ENCODE measurements at regions of chr7 and their contacts with region 1.

Region 1: DNA sequence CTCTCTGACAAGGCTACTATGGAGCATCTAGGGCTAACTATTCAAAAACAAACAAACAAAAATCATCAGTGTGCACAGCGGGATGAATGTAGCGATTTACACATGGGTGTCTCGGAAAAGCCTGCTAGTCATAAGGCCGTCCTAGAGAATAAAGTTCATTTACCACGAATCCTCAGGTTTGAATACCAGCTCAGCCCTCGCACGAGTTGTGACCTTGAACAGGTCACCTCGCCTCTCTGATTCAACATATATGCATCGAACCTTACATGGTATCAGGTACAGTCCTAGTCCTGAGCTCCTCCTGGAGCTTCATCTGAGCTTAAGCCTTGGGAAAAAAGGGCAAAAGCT is 572 bp downstream of the ATP5MF start:
- DNase-seq: no peak
- ATAC-seq: no peak
- H3K4me3 ChIP-seq: peak overlapping the region; percentile 80 to 96 (median 83)
- H3K4me3 Mint-ChIP-seq: peak overlapping the region; percentile 99
- H3K27ac ChIP-seq: peak overlapping the region; percentile 50 to 80
- H3K27ac Mint-ChIP-seq: peak overlapping the region; percentile 89
- H3K4me1 ChIP-seq: peaks cover 9 to 23% of the 10 kb centered on the region in 2 donors
- H3K4me1 Mint-ChIP-seq: peaks cover 25% of the 10 kb centered on the region
- H3K27me3 ChIP-seq: no peaks in the 10 kb centered on the region
- H3K27me3 Mint-ChIP-seq: no peaks in the 10 kb centered on the region
- CTCF ChIP-seq: no peak

Region 2: GRCh38 chr7:99325545-99326407 is 139.6 kb before region 1 on chr7 and contains the start of gene ARPC1A:
- CTCF ChIA-PET with region 1: no interaction called
- POLR2A ChIA-PET with region 1: no interaction called
- intact Hi-C with region 1: loop called (anchors 1 kb)
- DNase-seq: peak; percentile 95
- ATAC-seq: peak; percentile 90
- H3K4me3 ChIP-seq: peak within 1 kb of the TSS; percentile 88 to 99 (median 91)
- H3K4me3 Mint-ChIP-seq: peak within 1 kb of the TSS; percentile 85
- H3K27ac ChIP-seq: peak within 1 kb of the TSS; percentile 56 to 80
- H3K27ac Mint-ChIP-seq: peak within 1 kb of the TSS; percentile 92
- H3K4me1 ChIP-seq: peaks cover 22 to 28% of the 10 kb centered on the region in 2 donors
- H3K4me1 Mint-ChIP-seq: peaks cover 36% of the 10 kb centered on the region
- H3K27me3 ChIP-seq: no peaks in the 10 kb centered on the region
- H3K27me3 Mint-ChIP-seq: no peaks in the 10 kb centered on the region
- CTCF ChIP-seq: no peak
- total RNA-seq, gene ARPC1A: 41.7 and 47.8 TPM in 2 replicates

Region 3: DNA sequence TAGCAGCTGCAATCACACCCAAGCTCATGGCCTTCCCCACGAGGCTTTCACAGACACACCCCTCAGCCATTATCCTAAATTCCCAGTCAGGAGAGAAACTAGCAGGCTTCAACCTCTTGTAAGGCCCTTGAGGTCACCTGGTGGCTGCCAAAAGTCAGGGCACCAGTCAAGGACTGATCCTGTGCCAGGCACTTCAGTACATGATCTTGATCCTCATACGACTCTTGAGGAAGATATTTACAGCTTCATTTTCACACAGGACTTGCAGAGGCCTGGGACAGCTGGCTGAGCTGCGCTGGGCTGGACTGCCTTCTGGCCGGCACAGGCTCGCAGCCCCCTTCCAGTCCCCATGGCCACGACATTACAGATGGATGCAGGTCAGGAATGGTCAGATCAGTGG is 65.8 kb before region 1 on chr7:
- CTCF ChIA-PET with region 1: no interaction called
- POLR2A ChIA-PET with region 1: no interaction called
- intact Hi-C with region 1: no loop called
- DNase-seq: no peak
- ATAC-seq: no peak
- H3K4me3 ChIP-seq: no peak overlapping the region
- H3K4me3 Mint-ChIP-seq: no peak overlapping the region
- H3K27ac ChIP-seq: no peak overlapping the region
- H3K27ac Mint-ChIP-seq: no peak overlapping the region
- H3K4me1 ChIP-seq: no peaks in the 10 kb centered on the region
- H3K4me1 Mint-ChIP-seq: peaks cover 8% of the 10 kb centered on the region
- H3K27me3 ChIP-seq: no peaks in the 10 kb centered on the region
- H3K27me3 Mint-ChIP-seq: no peaks in the 10 kb centered on the region
- CTCF ChIP-seq: no peak

Region 4: GRCh38 chr7:99438573-99439480 is 26.6 kb before region 1 on chr7 and contains the starts of genes CPSF4 and PTCD1:
- CTCF ChIA-PET with region 1: interaction called, 3 read pairs
- POLR2A ChIA-PET with region 1: no interaction called
- intact Hi-C with region 1: loop called (anchors 1 kb)
- DNase-seq: peak; percentile 93
- ATAC-seq: peak; percentile 96
- H3K4me3 ChIP-seq: peak within 1 kb of the TSS; percentile 41 to 97 (median 92)
- H3K4me3 Mint-ChIP-seq: peak within 1 kb of the TSS; percentile 97
- H3K27ac ChIP-seq: peak within 1 kb of the TSS; percentile 59 to 79
- H3K27ac Mint-ChIP-seq: peak within 1 kb of the TSS; percentile 95
- H3K4me1 ChIP-seq: peaks cover 12 to 28% of the 10 kb centered on the region in 2 donors
- H3K4me1 Mint-ChIP-seq: peaks cover 30% of the 10 kb centered on the region
- H3K27me3 ChIP-seq: no peaks in the 10 kb centered on the region
- H3K27me3 Mint-ChIP-seq: no peaks in the 10 kb centered on the region
- CTCF ChIP-seq: no peak
- total RNA-seq, gene CPSF4: 60.0 and 63.2 TPM in 2 replicates
- total RNA-seq, gene PTCD1: 10.2 and 14.8 TPM in 2 replicates

Region 5: DNA sequence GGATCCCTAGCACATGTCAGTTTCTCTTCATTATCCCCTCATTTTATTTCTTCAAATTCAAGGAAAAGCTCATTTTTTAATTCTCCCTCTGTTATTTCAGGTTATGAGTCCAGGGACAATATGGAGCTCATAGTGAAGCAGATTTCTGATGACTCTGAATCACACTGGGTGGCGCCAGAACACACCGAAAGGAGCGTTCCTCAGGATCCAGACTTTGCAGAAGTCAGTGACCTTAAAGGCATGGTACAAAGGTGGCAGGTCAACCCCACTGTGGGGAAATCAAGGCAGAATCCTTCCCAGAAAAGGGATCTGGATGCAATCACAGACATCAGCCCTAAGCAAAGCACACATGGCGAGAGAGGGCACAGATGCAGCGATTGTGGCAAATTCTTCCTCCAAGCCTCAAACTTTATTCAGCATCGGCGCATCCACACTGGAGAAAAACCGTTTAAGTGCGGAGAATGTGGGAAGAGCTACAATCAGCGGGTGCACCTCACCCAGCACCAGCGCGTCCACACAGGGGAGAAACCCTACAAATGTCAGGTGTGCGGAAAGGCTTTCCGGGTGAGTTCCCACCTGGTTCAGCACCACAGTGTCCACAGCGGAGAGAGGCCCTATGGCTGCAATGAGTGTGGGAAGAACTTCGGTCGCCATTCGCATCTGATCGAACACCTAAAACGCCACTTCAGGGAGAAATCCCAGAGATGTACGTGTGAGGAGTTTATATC is 60.5 kb after region 1 on chr7:
- CTCF ChIA-PET with region 1: no interaction called
- POLR2A ChIA-PET with region 1: interaction called, 12 read pairs
- intact Hi-C with region 1: no loop called
- DNase-seq: no peak
- ATAC-seq: no peak
- H3K4me3 ChIP-seq: no peak overlapping the region
- H3K4me3 Mint-ChIP-seq: no peak overlapping the region
- H3K27ac ChIP-seq: no peak overlapping the region
- H3K27ac Mint-ChIP-seq: no peak overlapping the region
- H3K4me1 ChIP-seq: no peaks in the 10 kb centered on the region
- H3K4me1 Mint-ChIP-seq: peaks cover 2% of the 10 kb centered on the region
- H3K27me3 ChIP-seq: no peaks in the 10 kb centered on the region
- H3K27me3 Mint-ChIP-seq: no peaks in the 10 kb centered on the region
- CTCF ChIP-seq: no peak

Region 6: DNA sequence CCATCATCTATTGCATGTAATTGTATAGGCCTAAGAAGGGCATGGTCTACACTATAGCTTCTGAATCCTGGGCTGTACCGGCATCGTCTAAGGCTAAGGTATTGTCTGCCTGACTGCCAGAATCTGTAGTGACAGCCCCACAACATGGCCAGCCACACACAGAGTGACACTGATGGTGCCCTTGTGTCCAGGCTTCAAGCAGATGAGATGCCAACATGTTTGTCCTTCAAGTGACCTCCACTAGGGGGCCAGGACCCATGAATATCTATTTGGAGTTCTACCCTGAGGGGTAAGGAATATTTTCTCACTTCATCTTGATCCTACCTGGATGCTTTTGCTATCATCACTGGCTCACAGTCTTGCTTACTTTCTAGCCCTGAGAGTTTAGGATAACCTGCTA is 268.1 kb after region 1 on chr7:
- CTCF ChIA-PET with region 1: no interaction called
- POLR2A ChIA-PET with region 1: no interaction called
- intact Hi-C with region 1: no loop called
- DNase-seq: no peak
- ATAC-seq: no peak
- H3K4me3 ChIP-seq: no peak overlapping the region
- H3K4me3 Mint-ChIP-seq: no peak overlapping the region
- H3K27ac ChIP-seq: no peak overlapping the region
- H3K27ac Mint-ChIP-seq: no peak overlapping the region
- H3K4me1 ChIP-seq: no peaks in the 10 kb centered on the region
- H3K4me1 Mint-ChIP-seq: no peaks in the 10 kb centered on the region
- H3K27me3 ChIP-seq: peaks cover 0 to 3% (median 0%) of the 10 kb centered on the region in 4 experiments
- H3K27me3 Mint-ChIP-seq: peaks cover 9% of the 10 kb centered on the region
- CTCF ChIP-seq: peak; percentile 41

Measured in B cell (primary cell).